Activated naive CD4-positive, alpha-beta T cell treated with anti-CD3 and anti-CD28 coated beads for 36 hours (primary cell): ENCODE measurements at regions of chr17 and their contacts with region 1.

Region 1: DNA sequence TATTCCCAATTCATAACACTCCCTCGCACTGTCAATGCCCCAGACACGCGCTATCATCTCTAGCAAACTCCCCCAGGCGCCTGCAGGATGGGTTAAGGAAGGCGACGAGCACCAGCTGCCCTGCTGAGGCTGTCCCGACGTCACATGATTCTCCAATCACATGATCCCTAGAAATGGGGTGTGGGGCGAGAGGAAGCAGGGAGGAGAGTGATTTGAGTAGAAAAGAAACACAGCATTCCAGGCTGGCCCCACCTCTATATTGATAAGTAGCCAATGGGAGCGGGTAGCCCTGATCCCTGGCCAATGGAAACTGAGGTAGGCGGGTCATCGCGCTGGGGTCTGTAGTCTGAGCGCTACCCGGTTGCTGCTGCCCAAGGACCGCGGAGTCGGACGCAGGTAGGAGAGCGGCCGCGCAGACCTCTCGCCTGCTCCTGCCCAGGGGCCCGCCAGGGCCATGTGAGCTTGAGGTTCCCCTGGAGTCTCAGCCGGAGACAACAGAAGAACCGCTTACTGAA is at the start of gene GRN:
- DNase-seq: peak; percentile 93
- H3K4me3 Mint-ChIP-seq: peak within 1 kb of the TSS; percentile 73
- H3K27ac Mint-ChIP-seq: peak within 1 kb of the TSS; percentile 43
- H3K4me1 Mint-ChIP-seq: peaks cover 10% of the 10 kb centered on the region
- H3K27me3 Mint-ChIP-seq: no peaks in the 10 kb centered on the region
- total RNA-seq, gene GRN: 47.1 to 50.5 TPM

Region 2: DNA sequence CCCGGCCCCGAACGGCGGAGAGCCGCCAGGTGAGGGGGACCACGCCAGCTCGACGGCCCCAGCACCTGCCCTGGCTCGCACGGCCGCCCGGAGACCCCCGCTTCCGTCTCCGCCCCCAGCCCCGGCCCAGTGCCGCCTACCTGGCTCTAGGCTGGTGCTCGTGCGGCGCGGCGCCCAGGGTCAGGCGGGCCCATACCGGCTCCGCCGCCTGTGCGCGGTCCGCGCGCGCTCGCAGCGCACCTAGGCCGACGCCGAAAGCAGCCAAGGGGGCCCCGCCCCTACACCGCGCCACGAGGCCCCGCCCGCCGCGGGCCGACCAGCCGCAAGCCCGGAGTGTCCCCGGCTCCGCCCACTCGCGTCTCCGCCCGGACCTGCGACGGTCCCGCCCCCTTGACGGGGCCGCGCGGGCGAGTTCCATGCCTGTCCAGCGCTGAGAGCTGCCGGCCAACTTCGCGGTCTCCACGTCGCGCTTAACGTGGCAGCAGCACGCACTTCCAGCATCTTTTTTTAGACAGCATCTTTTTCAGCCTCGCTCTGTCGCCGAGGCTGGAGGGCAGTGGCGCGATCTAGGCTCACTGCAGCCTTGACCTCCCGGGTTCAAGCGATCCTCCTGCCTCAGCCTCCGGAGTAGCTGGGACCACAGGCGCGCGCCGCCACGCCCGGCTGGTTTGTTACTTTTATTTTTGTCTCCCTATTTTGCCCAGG is 20.3 kb before region 1 on chr17 and contains the start of gene SLC25A39:
- CTCF ChIA-PET with region 1: interaction called, 5 read pairs
- intact Hi-C with region 1: loop called (anchors 1 kb)
- DNase-seq: peak; percentile 93
- H3K4me3 Mint-ChIP-seq: peak within 1 kb of the TSS; percentile 87
- H3K27ac Mint-ChIP-seq: peak within 1 kb of the TSS; percentile 87
- H3K4me1 Mint-ChIP-seq: peaks cover 30% of the 10 kb centered on the region
- H3K27me3 Mint-ChIP-seq: no peaks in the 10 kb centered on the region
- total RNA-seq, gene SLC25A39: 146 to 149 TPM

Region 3: GRCh38 chr17:44587339-44587738 is 242.3 kb after region 1 on chr17:
- CTCF ChIA-PET with region 1: no interaction called
- intact Hi-C with region 1: no loop called
- DNase-seq: no peak
- H3K4me3 Mint-ChIP-seq: no peak overlapping the region
- H3K27ac Mint-ChIP-seq: no peak overlapping the region
- H3K4me1 Mint-ChIP-seq: no peaks in the 10 kb centered on the region
- H3K27me3 Mint-ChIP-seq: no peaks in the 10 kb centered on the region